ENCODE measurements at regions of chr11 and their contacts with region 1.

Region 1: DNA sequence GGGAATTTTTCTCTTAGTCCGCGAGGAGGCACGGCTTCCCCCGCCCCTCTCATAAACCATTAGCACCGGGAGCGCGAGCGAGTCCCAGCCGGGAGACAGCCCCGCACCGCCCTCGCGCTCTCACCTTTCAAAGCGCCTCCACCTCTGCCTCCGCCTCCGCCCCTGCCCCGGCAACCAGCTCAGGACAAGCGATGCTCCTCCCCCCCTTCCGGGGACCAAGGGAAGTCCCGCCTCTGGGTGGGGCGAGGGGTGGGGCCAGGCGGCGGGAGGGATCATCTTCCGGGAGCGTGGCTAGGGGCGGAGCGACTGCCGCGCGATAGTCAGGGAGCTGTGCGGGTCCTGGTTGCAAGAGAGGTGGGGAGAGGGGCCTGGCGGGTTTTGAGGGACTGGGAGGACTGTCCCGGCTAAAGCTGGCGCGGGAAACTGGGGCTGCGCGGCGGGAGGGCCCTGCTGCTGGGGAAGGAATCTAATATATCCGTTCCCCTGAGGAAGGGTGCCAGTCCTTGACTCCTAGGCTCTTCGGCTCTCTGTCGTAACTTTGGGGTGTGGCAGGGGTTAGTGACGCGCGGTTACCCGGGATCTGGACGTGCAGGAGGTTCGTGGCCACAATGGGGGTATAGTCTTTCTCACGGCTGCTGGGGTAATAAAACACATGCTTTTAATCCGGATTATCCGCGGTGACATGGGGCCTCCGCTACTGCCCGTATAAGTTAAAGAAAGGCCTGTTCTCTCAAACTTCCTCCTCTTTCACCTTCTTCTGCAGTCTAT is at the starts of genes CCDC82 and JRKL:
- DNase-seq: peak; percentile 96 to 98
- H3K4me3 ChIP-seq: peak within 1 kb of the TSS; percentile 77 to 92
- H3K27ac ChIP-seq: peak within 1 kb of the TSS; percentile 80 to 90
- H3K4me1 ChIP-seq: peaks cover 0 to 30% (median 5%) of the 10 kb centered on the region in 4 donors
- H3K27me3 ChIP-seq: no peaks in the 10 kb centered on the region
- CTCF ChIP-seq: no peak

Region 2: DNA sequence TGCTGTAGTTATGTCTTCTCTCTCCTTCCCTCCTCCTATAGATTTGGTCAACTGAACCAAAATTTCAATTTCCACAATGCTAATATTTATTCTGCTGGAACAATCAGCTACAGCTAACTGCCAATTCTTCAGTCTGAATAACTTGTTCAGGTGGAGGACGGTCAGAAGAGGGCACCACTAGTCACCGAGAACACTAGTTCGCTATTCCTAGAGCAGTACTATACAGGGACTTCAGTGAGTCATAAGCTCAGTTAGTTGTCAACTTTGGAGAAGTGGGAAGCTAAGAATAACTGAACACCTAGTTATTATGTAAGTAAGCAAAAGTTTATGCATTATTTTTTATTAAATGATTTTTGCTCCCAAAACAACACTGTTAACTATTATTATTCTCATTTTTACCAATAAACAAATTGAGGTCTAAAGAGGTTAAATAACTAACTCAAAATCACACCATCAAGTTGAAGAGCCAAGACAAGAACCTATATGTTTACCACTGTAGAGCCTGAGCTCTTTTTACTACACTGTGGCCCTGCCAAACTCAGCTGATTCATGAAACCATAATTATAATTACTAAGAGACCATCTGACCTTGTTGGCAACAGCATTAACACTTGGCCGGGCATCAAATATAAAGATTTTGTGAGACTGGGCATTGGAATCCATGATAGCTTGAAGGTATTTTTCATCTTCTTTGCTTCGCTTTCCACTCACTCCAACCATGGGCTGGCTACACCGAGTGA is 540.6 kb before region 1 on chr11:
- intact Hi-C with region 1: loop called (anchors 10 kb)
- DNase-seq: peak; percentile 66 to 79
- H3K4me3 ChIP-seq: no peak overlapping the region
- H3K27ac ChIP-seq: peak overlapping the region; percentile 19 to 33
- H3K4me1 ChIP-seq: peaks cover 0 to 5% (median 4%) of the 10 kb centered on the region in 4 donors
- H3K27me3 ChIP-seq: no peaks in the 10 kb centered on the region
- CTCF ChIP-seq: peak; percentile 57 to 67